ENCODE measurements at regions of chr13 and their contacts with region 1.

Region 1: GRCh38 chr13:48303359-48304142 is at the start of gene RB1:
- DNase-seq: peak; percentile 90
- ATAC-seq: peak; percentile 71
- H3K4me3 Mint-ChIP-seq: peak within 1 kb of the TSS; percentile 99
- H3K27ac Mint-ChIP-seq: peak within 1 kb of the TSS; percentile 100
- H3K4me1 Mint-ChIP-seq: peaks cover 39% of the 10 kb centered on the region
- H3K27me3 Mint-ChIP-seq: no peaks in the 10 kb centered on the region
- CTCF ChIP-seq: no peak
- total RNA-seq, gene RB1: 61.1 and 70.5 TPM in 2 replicates

Region 2: GRCh38 chr13:48126944-48127830 is 176.4 kb before region 1 on chr13:
- CTCF ChIA-PET with region 1: interaction called, 5 read pairs
- POLR2A ChIA-PET with region 1: interaction called, 3 read pairs
- intact Hi-C with region 1: loop called (anchors 1 kb)
- DNase-seq: no peak
- ATAC-seq: peak; percentile 90
- H3K4me3 Mint-ChIP-seq: no peak overlapping the region
- H3K27ac Mint-ChIP-seq: peak overlapping the region; percentile 9
- H3K4me1 Mint-ChIP-seq: peaks cover 7% of the 10 kb centered on the region
- H3K27me3 Mint-ChIP-seq: no peaks in the 10 kb centered on the region
- CTCF ChIP-seq: peak; percentile 74

Region 3: DNA sequence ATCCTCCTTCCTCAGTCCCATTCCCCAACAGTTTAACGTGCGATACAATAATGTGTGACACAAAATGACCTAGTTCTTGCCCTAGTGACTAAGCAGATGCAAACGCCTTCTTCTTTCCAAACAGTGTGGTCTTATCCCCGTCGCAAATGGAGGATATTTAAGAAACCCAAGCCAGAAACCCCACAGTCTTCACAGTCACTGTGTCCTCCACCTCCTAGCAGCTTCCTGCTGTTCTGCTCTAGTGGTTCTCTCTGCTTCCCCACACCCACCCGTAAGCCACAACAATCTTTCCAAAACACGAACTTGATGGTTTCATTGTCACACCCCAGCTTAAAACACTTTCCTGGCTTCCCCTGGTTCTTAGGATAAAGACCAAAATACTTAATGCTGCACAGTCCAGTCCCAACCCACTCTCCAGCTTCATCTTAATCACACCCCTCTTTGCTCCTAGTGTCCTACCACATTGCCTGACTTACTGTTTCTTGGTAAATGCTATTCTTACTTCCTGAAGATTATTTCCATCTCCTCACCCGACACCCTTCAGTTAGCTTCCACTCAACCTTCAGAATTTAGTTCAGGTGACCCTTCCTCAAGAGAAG is 38.2 kb before region 1 on chr13:
- CTCF ChIA-PET with region 1: no interaction called
- POLR2A ChIA-PET with region 1: interaction called, 23 read pairs
- intact Hi-C with region 1: loop called (anchors 1 kb)
- DNase-seq: peak; percentile 23
- ATAC-seq: peak; percentile 86
- H3K4me3 Mint-ChIP-seq: peak overlapping the region; percentile 75
- H3K27ac Mint-ChIP-seq: peak overlapping the region; percentile 85
- H3K4me1 Mint-ChIP-seq: peaks cover 52% of the 10 kb centered on the region
- H3K27me3 Mint-ChIP-seq: no peaks in the 10 kb centered on the region
- CTCF ChIP-seq: no peak

Region 4: GRCh38 chr13:48492470-48493065 is 189.0 kb after region 1 on chr13:
- CTCF ChIA-PET with region 1: no interaction called
- POLR2A ChIA-PET with region 1: no interaction called
- intact Hi-C with region 1: loop called (anchors 1 kb)
- DNase-seq: peak; percentile 60
- ATAC-seq: peak; percentile 89
- H3K4me3 Mint-ChIP-seq: no peak overlapping the region
- H3K27ac Mint-ChIP-seq: no peak overlapping the region
- H3K4me1 Mint-ChIP-seq: peaks cover 34% of the 10 kb centered on the region
- H3K27me3 Mint-ChIP-seq: no peaks in the 10 kb centered on the region
- CTCF ChIP-seq: no peak

Region 5: DNA sequence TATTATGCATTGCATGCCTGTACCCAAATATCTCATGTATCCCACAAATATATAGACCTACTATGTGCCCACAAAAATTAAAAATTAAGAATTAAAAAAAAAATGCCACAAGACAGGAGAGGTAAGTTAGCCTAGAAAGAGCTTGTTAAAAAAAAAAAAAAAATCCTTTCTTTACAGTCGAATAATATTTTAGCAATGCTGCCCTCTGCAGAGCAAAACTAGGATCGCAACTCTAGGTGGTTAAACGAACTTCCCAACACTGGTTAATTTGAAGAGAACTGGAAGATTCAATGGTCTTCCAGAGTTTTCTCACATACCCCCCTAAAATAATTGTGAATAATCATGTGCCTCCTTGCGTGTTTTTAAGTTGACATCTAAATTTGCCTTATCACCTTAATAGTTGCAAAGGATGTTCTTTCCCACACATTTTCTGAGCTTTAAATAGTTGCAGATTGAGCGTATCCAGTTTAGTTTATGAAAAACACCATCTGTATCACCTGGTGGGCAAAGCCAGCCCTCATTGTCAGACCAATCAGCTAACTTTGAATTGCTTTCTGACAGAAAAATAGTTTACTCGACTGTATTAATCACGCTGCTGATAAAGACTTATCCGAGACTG is 276.7 kb after region 1 on chr13:
- CTCF ChIA-PET with region 1: no interaction called
- POLR2A ChIA-PET with region 1: interaction called, 9 read pairs
- intact Hi-C with region 1: loop called (anchors 1 kb)
- DNase-seq: no peak
- ATAC-seq: peak; percentile 47
- H3K4me3 Mint-ChIP-seq: no peak overlapping the region
- H3K27ac Mint-ChIP-seq: no peak overlapping the region
- H3K4me1 Mint-ChIP-seq: peaks cover 21% of the 10 kb centered on the region
- H3K27me3 Mint-ChIP-seq: peaks cover 51% of the 10 kb centered on the region
- CTCF ChIP-seq: peak; percentile 38

Region 6: DNA sequence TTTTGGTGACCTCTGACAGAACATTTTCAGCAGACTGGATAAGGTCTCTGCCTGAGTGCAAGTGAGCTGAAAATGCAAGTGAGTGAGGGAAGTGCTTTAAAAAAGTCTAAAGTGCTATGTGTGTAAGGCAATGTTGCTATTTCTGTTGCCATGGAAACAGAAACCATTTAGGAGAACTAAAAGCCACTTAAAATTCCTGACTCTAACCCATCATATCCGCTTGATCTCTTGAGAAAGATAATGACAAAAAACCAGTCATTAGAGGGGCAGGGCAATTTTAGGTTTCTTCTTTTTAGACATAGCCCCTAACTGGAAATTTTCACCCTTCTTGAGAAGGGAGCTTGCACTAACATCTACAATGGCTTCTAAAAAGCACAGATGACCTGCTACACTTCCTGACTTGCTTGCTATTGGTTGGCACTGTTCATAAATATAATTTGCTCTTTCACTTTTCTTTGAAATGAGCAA is 350.0 kb after region 1 on chr13 and contains the start of gene CYSLTR2:
- CTCF ChIA-PET with region 1: no interaction called
- POLR2A ChIA-PET with region 1: no interaction called
- intact Hi-C with region 1: no loop called
- DNase-seq: no peak
- ATAC-seq: peak; percentile 68
- H3K4me3 Mint-ChIP-seq: peak within 1 kb of the TSS; percentile 24
- H3K27ac Mint-ChIP-seq: no peak within 1 kb of the TSS
- H3K4me1 Mint-ChIP-seq: peaks cover 15% of the 10 kb centered on the region
- H3K27me3 Mint-ChIP-seq: peaks cover 14% of the 10 kb centered on the region
- CTCF ChIP-seq: no peak
- total RNA-seq, gene CYSLTR2: 0.11 TPM in 1 of 2 replicates, not detected in the other

Region 7: GRCh38 chr13:49792550-49793324 is 1489.2 kb after region 1 on chr13 and contains the start of gene KPNA3:
- CTCF ChIA-PET with region 1: no interaction called
- POLR2A ChIA-PET with region 1: interaction called, 3 read pairs
- intact Hi-C with region 1: loop called (anchors 5 kb)
- DNase-seq: peak; percentile 88
- ATAC-seq: peak; percentile 89
- H3K4me3 Mint-ChIP-seq: peak within 1 kb of the TSS; percentile 97
- H3K27ac Mint-ChIP-seq: peak within 1 kb of the TSS; percentile 97
- H3K4me1 Mint-ChIP-seq: peaks cover 31% of the 10 kb centered on the region
- H3K27me3 Mint-ChIP-seq: no peaks in the 10 kb centered on the region
- CTCF ChIP-seq: no peak
- total RNA-seq, gene KPNA3: 28.6 and 28.7 TPM in 2 replicates